ENCODE measurements at regions of chr4 and their contacts with region 1.

Region 1: DNA sequence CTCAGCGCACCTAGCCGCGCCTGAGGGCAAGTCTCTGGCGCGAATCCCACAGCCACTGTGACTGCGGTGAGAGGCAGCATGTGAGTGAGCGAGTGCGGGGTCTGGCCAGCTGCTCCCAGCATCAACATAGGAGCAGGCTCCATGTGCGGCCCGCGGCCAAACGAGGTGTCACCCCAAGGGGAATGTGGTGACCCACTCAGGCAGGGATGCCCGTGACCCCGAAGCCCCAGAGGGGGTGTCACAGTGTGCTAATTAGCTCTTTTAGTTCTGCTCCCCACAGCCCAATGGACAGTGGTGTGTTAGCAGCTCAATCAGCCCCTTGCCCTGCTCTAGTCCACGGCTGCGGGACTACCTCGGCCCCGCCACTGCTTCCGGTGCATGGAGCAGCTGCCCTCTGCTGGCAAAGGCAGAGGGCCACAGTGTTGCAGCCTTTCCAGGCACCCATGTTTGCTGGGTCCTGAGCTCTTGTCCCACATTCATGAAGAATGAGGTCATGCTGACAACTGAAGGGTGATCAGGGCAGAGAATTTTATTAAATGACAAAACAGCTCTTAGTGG is 61.4 kb downstream of the AGA start:
- DNase-seq: peak; percentile 17 to 50 (median 22)
- ATAC-seq: peak; percentile 98
- H3K4me3 ChIP-seq: no peak overlapping the region
- H3K27ac ChIP-seq: no peak overlapping the region
- H3K4me1 ChIP-seq: peaks cover 0 to 9% of the 10 kb centered on the region in 2 experiments; a peak in 2 of 5 replicates
- H3K27me3 ChIP-seq: no peaks in the 10 kb centered on the region
- CTCF ChIP-seq: peak; percentile 40 to 59 (median 55)
- EP300 ChIP-seq: no peak
- POLR2A ChIP-seq: no peak
- RAD21 ChIP-seq: peak in 1 of 2 experiments; percentile 53; a peak in 2 of 4 replicates

Region 2: DNA sequence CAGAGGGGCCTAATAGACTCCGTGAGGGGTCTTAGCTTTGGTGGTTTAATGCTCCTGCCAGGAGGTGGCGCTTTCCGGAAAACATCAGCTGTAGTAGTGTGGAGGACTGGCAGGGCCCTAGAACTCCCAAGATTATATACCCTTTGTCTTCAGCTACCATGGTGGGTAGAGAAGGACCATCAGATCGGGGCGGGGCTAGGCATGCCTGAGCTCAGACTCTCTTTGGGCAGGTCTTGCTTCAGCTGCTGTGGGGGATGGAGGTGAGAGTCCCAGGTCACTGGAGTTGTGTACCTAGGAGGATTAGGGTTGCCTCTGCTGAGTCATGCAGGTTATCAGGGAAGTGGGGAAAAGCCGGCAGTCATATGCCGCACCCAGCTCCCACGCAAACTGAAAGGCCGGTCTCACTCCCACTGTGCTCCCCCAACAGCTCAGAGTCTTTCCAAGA is 124.4 kb after region 1 on chr4:
- CTCF ChIA-PET with region 1: no interaction called
- POLR2A ChIA-PET with region 1: no interaction called
- in situ Hi-C with region 1: loop called (anchors 10 kb)
- intact Hi-C with region 1: no loop called
- DNase-seq: peak; percentile 19 to 72 (median 29)
- ATAC-seq: peak; percentile 89
- H3K4me3 ChIP-seq: no peak overlapping the region
- H3K27ac ChIP-seq: peak overlapping the region; percentile 57; the same call in 2 of the 3 replicates
- H3K4me1 ChIP-seq: peaks cover 5 to 8% of the 10 kb centered on the region in 2 experiments; a peak in 2 of 5 replicates
- H3K27me3 ChIP-seq: no peaks in the 10 kb centered on the region
- CTCF ChIP-seq: peak in 2 of 3 experiments; percentile 33 to 38; a peak in 5 of 6 replicates
- EP300 ChIP-seq: peak; percentile 65
- POLR2A ChIP-seq: no peak
- RAD21 ChIP-seq: no peak

Region 3: DNA sequence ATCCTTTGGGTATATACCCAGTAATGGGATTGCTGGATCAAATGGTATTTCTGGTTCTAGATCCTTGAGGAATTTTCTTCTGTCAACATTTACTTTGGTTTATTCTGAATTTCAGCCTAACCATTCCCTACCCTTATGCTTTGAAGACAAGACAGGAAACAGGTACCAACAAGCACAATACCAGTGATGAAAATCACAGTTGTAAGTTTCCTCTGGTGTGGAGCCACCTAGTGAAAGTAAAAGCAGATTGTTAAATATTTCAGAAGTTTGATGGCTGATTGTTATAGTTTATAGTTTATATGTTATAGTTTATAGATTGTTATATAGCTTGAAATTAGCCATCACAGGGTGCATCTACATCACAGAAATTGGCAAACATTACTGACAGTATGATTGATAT is 165.9 kb after region 1 on chr4:
- CTCF ChIA-PET with region 1: no interaction called
- POLR2A ChIA-PET with region 1: no interaction called
- in situ Hi-C with region 1: no loop called
- intact Hi-C with region 1: loop called (anchors 5 kb)
- DNase-seq: no peak
- ATAC-seq: no peak
- H3K4me3 ChIP-seq: no peak overlapping the region
- H3K27ac ChIP-seq: no peak overlapping the region
- H3K4me1 ChIP-seq: no peaks in the 10 kb centered on the region; a peak in 1 of 5 replicates
- H3K27me3 ChIP-seq: no peaks in the 10 kb centered on the region
- CTCF ChIP-seq: no peak
- EP300 ChIP-seq: no peak
- POLR2A ChIP-seq: no peak
- RAD21 ChIP-seq: no peak

Region 4: GRCh38 chr4:179307297-179308136 is 1926.7 kb after region 1 on chr4:
- CTCF ChIA-PET with region 1: no interaction called
- POLR2A ChIA-PET with region 1: no interaction called
- in situ Hi-C with region 1: no loop called
- intact Hi-C with region 1: loop called (anchors 5 kb)
- DNase-seq: peak; percentile 10 to 42 (median 30)
- ATAC-seq: peak; percentile 49; the same call in 1 of the 3 replicates
- H3K4me3 ChIP-seq: no peak overlapping the region
- H3K27ac ChIP-seq: no peak overlapping the region
- H3K4me1 ChIP-seq: no peaks in the 10 kb centered on the region
- H3K27me3 ChIP-seq: no peaks in the 10 kb centered on the region
- CTCF ChIP-seq: peak; percentile 12 to 61 (median 39); a peak in 3 of 6 replicates
- EP300 ChIP-seq: no peak
- POLR2A ChIP-seq: no peak
- RAD21 ChIP-seq: peak in 1 of 2 experiments; percentile 49; a peak in 2 of 4 replicates